ENCODE measurements at regions of chr1 and their contacts with region 1.

Region 1: DNA sequence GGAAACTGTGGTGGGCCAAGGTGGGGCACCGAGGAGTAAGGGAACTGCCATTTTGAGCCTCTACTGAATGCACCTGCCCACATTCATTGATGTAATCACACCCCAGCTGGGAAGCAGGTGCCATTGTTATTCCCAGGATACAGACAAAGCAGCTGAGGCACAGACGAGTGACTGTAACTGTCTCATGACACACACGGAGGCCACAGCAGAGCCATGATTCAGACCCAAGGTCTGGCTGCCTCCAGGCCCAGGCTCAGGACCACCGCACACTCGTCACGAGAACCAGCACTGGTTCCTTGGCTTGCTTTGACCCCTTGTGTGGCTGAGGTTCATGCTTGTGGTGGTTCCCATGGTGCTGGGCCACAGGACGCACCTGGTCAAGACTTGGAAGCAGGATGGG is 45.6 kb upstream of the CLIC4 start:
- DNase-seq: no peak
- ATAC-seq: no peak
- H3K4me3 Mint-ChIP-seq: no peak overlapping the region
- H3K27ac Mint-ChIP-seq: no peak overlapping the region
- H3K4me1 Mint-ChIP-seq: peaks cover 25% of the 10 kb centered on the region
- H3K27me3 Mint-ChIP-seq: no peaks in the 10 kb centered on the region
- CTCF ChIP-seq: no peak

Region 2: GRCh38 chr1:24714859-24715520 is 15.4 kb after region 1 on chr1:
- CTCF ChIA-PET with region 1: no interaction called
- POLR2A ChIA-PET with region 1: interaction called, 12 read pairs
- intact Hi-C with region 1: no loop called
- DNase-seq: no peak
- ATAC-seq: no peak
- H3K4me3 Mint-ChIP-seq: no peak overlapping the region
- H3K27ac Mint-ChIP-seq: no peak overlapping the region
- H3K4me1 Mint-ChIP-seq: no peaks in the 10 kb centered on the region
- H3K27me3 Mint-ChIP-seq: no peaks in the 10 kb centered on the region
- CTCF ChIP-seq: no peak

Region 3: GRCh38 chr1:24769656-24770651 is 70.3 kb after region 1 on chr1:
- CTCF ChIA-PET with region 1: no interaction called
- POLR2A ChIA-PET with region 1: no interaction called
- intact Hi-C with region 1: no loop called
- DNase-seq: no peak
- ATAC-seq: peak; percentile 49
- H3K4me3 Mint-ChIP-seq: no peak overlapping the region
- H3K27ac Mint-ChIP-seq: no peak overlapping the region
- H3K4me1 Mint-ChIP-seq: peaks cover 57% of the 10 kb centered on the region
- H3K27me3 Mint-ChIP-seq: no peaks in the 10 kb centered on the region
- CTCF ChIP-seq: no peak

Region 4: DNA sequence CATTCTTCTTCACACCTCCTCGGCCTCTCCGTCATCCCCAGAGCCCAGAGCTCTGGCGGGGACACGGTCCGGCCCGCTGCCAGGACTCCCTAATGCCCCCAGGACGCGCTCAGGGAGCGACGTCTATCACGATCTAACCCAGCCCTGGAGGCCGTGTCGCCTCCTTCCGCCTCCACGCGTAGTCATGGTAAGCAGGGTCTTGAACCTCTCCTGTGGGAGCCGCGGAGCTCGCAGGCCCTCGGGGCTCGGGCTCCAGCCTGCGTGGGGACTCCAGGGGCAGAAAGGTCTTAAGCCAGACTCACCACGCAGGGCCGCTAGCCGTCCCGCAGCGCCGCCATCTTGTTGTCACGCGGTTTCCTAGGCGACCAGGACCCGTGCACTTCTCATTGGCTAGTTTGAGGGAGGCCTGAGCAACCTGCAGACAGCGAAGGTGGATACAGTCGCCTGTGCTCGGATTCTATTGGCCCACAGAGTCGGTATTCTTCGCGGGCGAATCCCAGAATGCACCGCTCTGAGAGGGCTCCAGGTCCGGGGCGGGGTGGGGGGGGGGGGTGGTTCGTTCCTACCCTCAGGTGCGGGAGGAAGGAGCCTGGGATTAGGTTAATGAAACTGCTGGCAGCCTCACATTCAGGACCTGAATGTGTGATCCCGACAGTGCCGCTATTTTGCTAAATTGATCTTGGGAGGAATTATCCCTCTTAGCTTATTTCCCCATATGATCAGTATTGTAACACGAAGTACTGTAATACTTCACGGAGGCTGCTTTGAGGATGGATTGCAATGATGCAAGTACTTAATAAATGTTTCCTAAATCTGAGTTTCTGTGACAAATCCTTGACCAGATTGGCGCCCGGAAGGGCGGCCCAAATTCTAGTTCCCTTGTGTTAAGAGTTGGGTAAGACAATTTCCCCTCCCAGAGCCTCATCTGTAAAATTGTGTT is 1606.9 kb after region 1 on chr1 and contains the start of gene UBXN11:
- CTCF ChIA-PET with region 1: no interaction called
- POLR2A ChIA-PET with region 1: interaction called, 10 read pairs
- intact Hi-C with region 1: no loop called
- DNase-seq: peak; percentile 81
- ATAC-seq: peak; percentile 99
- H3K4me3 Mint-ChIP-seq: peak within 1 kb of the TSS; percentile 99
- H3K27ac Mint-ChIP-seq: peak within 1 kb of the TSS; percentile 94
- H3K4me1 Mint-ChIP-seq: peaks cover 27% of the 10 kb centered on the region
- H3K27me3 Mint-ChIP-seq: no peaks in the 10 kb centered on the region
- CTCF ChIP-seq: no peak
- total RNA-seq, gene UBXN11: 35.5 and 36.9 TPM in 2 replicates